ENCODE measurements at regions of chr4 and their contacts with region 1.

Region 1: GRCh38 chr4:168803732-168804131 is 206.3 kb downstream of the CBR4 start:
- DNase-seq: no peak
- ATAC-seq: peak; percentile 92
- H3K4me3 Mint-ChIP-seq: no peak overlapping the region
- H3K27ac Mint-ChIP-seq: peak overlapping the region; percentile 87
- H3K4me1 Mint-ChIP-seq: peaks cover 27% of the 10 kb centered on the region
- H3K27me3 Mint-ChIP-seq: no peaks in the 10 kb centered on the region
- CTCF ChIP-seq: no peak

Region 2: GRCh38 chr4:168761066-168761465 is 42.7 kb before region 1 on chr4:
- CTCF ChIA-PET with region 1: no interaction called
- POLR2A ChIA-PET with region 1: interaction called, 10 read pairs
- DNase-seq: no peak
- ATAC-seq: no peak
- H3K4me3 Mint-ChIP-seq: no peak overlapping the region
- H3K27ac Mint-ChIP-seq: no peak overlapping the region
- H3K4me1 Mint-ChIP-seq: no peaks in the 10 kb centered on the region
- H3K27me3 Mint-ChIP-seq: no peaks in the 10 kb centered on the region
- CTCF ChIP-seq: no peak

Region 3: DNA sequence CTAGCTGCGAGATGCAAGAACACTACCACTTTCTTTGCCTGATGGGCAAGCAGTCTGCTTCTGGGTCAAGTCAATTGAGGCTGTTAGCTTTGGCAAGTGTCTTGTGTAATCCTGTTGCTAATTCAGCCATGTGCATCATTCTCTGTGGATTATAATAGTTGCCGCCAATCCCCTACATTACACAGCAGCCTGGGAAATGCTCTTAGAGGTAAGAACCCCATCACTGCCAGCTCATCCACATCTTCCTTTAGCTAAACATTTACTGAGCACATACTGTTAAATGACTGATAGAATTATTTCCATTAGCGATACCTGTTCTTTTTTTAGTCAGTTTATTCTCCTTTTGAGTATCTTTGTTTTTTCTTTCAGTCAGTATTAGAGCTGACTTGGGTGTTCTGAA is 90.1 kb after region 1 on chr4:
- CTCF ChIA-PET with region 1: no interaction called
- POLR2A ChIA-PET with region 1: no interaction called
- DNase-seq: no peak
- ATAC-seq: no peak
- H3K4me3 Mint-ChIP-seq: no peak overlapping the region
- H3K27ac Mint-ChIP-seq: no peak overlapping the region
- H3K4me1 Mint-ChIP-seq: peaks cover 3% of the 10 kb centered on the region; the same call in 1 of the 2 replicates
- H3K27me3 Mint-ChIP-seq: no peaks in the 10 kb centered on the region
- CTCF ChIP-seq: no peak

Measured in WTC11 (cell line).